Naive thymus-derived CD4-positive, alpha-beta T cell (primary cell): ENCODE measurements at regions of chr7 and their contacts with region 1.

Region 1: GRCh38 chr7:110877016-110877415 is 213.9 kb upstream of the LRRN3 start:
- DNase-seq: no peak
- ATAC-seq: no peak
- H3K4me3 ChIP-seq: no peak overlapping the region
- H3K4me3 Mint-ChIP-seq: no peak overlapping the region
- H3K27ac ChIP-seq: no peak overlapping the region
- H3K27ac Mint-ChIP-seq: peak overlapping the region in 1 of 9 donors; percentile 37
- H3K4me1 ChIP-seq: no peaks in the 10 kb centered on the region
- H3K4me1 Mint-ChIP-seq: peaks cover 0 to 16% (median under 1%) of the 10 kb centered on the region in 7 donors
- H3K27me3 ChIP-seq: no peaks in the 10 kb centered on the region
- H3K27me3 Mint-ChIP-seq: no peaks in the 10 kb centered on the region

Region 2: GRCh38 chr7:110863258-110863657 is 13.8 kb before region 1 on chr7:
- CTCF ChIA-PET with region 1: no interaction called
- POLR2A ChIA-PET with region 1: interaction called, 3 read pairs
- intact Hi-C with region 1: loop called in 1 of 2 experiments (anchors 2 kb)
- DNase-seq: no peak
- ATAC-seq: no peak
- H3K4me3 ChIP-seq: no peak overlapping the region
- H3K4me3 Mint-ChIP-seq: no peak overlapping the region
- H3K27ac ChIP-seq: no peak overlapping the region
- H3K27ac Mint-ChIP-seq: no peak overlapping the region
- H3K4me1 ChIP-seq: no peaks in the 10 kb centered on the region
- H3K4me1 Mint-ChIP-seq: peaks cover 0 to 10% (median 0%) of the 10 kb centered on the region in 7 donors
- H3K27me3 ChIP-seq: no peaks in the 10 kb centered on the region
- H3K27me3 Mint-ChIP-seq: no peaks in the 10 kb centered on the region

Region 3: GRCh38 chr7:110888641-110889040 is 11.6 kb after region 1 on chr7:
- CTCF ChIA-PET with region 1: interaction called, 3 read pairs
- POLR2A ChIA-PET with region 1: no interaction called
- intact Hi-C with region 1: loop called in 1 of 2 experiments (anchors 1 kb)
- DNase-seq: no peak
- ATAC-seq: no peak
- H3K4me3 ChIP-seq: no peak overlapping the region
- H3K4me3 Mint-ChIP-seq: no peak overlapping the region
- H3K27ac ChIP-seq: no peak overlapping the region
- H3K27ac Mint-ChIP-seq: no peak overlapping the region
- H3K4me1 ChIP-seq: no peaks in the 10 kb centered on the region
- H3K4me1 Mint-ChIP-seq: peaks cover 0 to 8% (median 4%) of the 10 kb centered on the region in 7 donors
- H3K27me3 ChIP-seq: no peaks in the 10 kb centered on the region
- H3K27me3 Mint-ChIP-seq: no peaks in the 10 kb centered on the region

Region 4: DNA sequence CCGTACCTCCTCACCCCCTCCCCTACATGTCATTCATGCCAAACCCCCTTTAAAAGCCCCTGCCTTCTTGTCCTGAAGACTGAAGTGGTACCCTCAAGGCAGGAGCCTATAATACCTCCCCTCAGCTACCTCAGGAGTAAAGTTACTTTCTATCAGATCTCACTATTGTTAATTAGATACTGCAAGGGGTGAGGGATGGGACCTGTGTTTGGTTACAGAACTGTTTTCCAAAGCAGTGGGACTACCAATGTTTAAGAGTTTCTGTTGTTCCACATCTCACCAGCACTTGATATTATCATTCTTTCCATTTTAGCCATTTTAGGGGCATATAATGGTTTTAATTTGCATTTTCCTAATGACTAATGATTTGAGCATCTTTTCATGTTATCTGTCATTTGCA is 17.1 kb after region 1 on chr7:
- CTCF ChIA-PET with region 1: interaction called, 3 read pairs
- POLR2A ChIA-PET with region 1: interaction called, 3 read pairs
- intact Hi-C with region 1: loop called in 1 of 2 experiments (anchors 1 kb)
- DNase-seq: no peak
- ATAC-seq: no peak
- H3K4me3 ChIP-seq: no peak overlapping the region
- H3K4me3 Mint-ChIP-seq: no peak overlapping the region
- H3K27ac ChIP-seq: no peak overlapping the region
- H3K27ac Mint-ChIP-seq: no peak overlapping the region
- H3K4me1 ChIP-seq: no peaks in the 10 kb centered on the region
- H3K4me1 Mint-ChIP-seq: peaks cover 0 to 7% (median 2%) of the 10 kb centered on the region in 7 donors
- H3K27me3 ChIP-seq: no peaks in the 10 kb centered on the region
- H3K27me3 Mint-ChIP-seq: no peaks in the 10 kb centered on the region